Activated naive CD4-positive, alpha-beta T cell treated with anti-CD3 and anti-CD28 coated beads, Interleukin-2, amount 10 ng/mL, durations not matched to agents 7 days and 5 days (primary cell): ENCODE measurements at regions of chr12 and their contacts with region 1.

Region 1: DNA sequence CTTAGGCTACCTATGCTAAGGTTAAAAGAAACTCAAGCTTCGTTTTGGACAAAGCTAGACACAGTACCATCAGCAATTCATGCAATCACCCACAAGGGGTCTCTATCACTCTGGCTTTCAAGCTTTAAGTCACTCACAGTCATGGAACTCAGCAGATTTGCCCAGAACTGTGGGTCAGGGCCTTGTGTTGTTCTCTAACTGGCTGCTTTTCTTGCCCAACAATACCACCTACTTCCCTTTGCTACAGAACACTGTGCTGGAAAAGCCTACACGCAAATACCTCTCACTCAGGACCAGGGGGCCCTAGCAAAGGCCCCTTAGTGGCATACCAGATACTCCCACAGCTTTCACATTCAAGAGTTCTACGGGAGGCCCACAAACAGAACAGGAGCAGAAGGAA is 9.1 kb downstream of the NEMP1 start:
- DNase-seq: peak; percentile 74
- H3K4me3 Mint-ChIP-seq: no peak overlapping the region
- H3K27ac Mint-ChIP-seq: peak overlapping the region; percentile 88
- H3K4me1 Mint-ChIP-seq: peaks cover 49% of the 10 kb centered on the region
- H3K27me3 Mint-ChIP-seq: no peaks in the 10 kb centered on the region

Region 2: DNA sequence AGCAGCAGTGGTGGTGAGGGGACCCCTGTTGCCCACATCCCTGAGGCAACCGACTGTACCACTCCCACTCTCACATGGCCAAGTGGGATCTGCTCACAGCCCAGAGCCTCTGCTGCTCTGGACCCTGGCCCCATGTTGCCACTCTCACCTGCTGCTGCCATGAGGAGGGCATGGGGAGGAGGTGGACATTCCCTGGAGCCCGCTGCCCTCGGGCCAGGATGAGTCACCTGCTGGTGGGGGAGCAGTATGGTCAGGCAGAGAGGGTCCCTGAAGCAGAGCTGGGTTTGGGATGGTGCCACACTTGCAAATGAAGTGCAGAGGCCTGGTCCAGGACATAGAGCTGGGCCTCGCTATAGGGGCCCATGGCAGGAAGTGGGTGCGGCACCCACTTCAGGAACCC is 161.4 kb before region 1 on chr12:
- CTCF ChIA-PET with region 1: no interaction called
- DNase-seq: no peak
- H3K4me3 Mint-ChIP-seq: no peak overlapping the region
- H3K27ac Mint-ChIP-seq: no peak overlapping the region
- H3K4me1 Mint-ChIP-seq: no peaks in the 10 kb centered on the region
- H3K27me3 Mint-ChIP-seq: no peaks in the 10 kb centered on the region

Region 3: DNA sequence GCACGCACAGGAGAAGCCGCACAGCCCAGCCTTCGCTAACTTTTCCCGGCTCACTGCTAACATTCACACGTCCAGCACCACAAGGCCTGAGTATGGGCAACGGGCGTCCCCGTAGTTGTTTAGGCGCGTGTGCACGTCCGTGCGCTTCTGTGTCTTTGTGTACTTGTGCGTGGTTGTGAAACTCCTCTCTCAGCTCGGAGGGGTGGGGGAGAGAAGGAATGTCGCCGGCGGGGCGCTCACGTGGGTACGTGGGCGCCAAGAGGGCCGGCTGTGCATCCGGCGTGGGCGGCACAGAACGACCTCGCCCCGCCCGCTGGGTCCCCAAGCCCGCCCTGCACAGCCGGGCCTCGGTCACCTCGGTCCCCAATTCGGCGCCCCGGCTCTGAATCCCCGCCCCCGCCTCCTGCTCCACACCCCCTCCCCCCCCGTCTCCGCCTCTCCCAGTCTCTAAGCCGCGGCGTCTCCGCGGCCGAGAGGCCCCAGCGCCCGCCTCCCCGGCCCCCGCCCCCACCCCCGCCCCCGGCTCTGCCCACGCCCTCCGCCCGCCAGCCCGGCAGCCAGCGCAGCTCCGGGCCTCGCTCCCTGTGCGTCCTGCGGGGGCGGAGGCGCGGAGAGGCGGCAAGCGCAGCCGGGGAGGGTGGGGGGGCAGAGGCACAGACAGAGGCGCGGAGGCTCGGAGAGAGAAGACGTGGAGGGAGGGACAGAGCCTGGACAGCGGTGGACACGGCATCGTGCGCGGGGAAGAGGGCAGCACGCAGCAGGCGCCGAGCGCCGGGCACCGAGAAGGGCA is 19.1 kb after region 1 on chr12 and contains the start of gene NAB2:
- CTCF ChIA-PET with region 1: interaction called, 76 read pairs
- DNase-seq: peak; percentile 97
- H3K4me3 Mint-ChIP-seq: peak within 1 kb of the TSS; percentile 88
- H3K27ac Mint-ChIP-seq: peak within 1 kb of the TSS; percentile 94
- H3K4me1 Mint-ChIP-seq: peaks cover 67% of the 10 kb centered on the region
- H3K27me3 Mint-ChIP-seq: no peaks in the 10 kb centered on the region

Region 4: DNA sequence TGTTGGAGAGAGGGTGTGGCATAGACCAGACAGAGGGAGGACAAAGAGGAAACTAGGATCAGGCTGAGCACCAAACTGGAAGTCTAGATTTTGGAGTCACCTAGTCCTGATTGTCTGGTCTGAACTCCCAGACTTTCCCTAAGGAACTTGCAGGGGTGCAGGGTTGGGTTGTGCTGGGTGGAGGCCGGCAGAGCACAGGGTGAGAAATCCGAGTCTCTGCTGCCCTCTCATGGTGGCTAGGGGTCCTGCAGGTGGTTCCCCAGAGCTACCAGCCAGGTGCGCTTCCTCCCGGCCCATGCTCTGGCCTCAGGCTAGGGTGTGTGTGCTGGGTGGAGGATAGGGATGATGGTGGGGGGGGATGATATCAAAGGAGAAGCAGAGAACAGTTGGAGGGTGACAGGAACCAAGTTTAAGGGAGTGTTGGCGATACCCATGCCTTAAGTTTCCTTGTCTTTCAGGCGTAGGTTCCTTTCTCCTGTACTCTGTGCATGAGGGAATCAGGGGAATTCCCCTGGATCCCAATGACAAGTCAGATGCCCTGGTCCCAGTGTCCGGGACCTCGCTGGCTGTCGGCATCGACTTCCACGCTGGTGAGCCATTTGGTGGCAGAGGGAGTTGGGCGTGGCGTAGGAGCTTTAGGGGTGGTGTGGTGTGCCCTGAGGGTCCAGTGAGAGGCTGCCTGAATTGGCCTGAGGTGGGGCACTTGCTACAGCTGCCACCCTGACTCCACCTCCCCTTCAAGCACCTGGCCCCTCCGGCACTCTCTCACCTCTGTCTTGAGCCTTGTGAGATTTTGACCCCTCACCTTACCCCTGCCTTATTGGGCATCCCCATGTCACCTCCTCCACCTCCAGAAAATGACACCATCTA is 113.6 kb after region 1 on chr12:
- CTCF ChIA-PET with region 1: interaction called, 17 read pairs
- DNase-seq: peak; percentile 88
- H3K4me3 Mint-ChIP-seq: no peak overlapping the region
- H3K27ac Mint-ChIP-seq: no peak overlapping the region
- H3K4me1 Mint-ChIP-seq: peaks cover 4% of the 10 kb centered on the region
- H3K27me3 Mint-ChIP-seq: peaks cover 21% of the 10 kb centered on the region